ENCODE measurements at regions of chr1 and their contacts with region 1.

Region 1: GRCh38 chr1:156608036-156608674 is 6.9 kb upstream of the GPATCH4 start:
- DNase-seq: no peak
- H3K4me3 ChIP-seq: no peak overlapping the region
- CTCF ChIP-seq: peak; percentile 82

Region 2: DNA sequence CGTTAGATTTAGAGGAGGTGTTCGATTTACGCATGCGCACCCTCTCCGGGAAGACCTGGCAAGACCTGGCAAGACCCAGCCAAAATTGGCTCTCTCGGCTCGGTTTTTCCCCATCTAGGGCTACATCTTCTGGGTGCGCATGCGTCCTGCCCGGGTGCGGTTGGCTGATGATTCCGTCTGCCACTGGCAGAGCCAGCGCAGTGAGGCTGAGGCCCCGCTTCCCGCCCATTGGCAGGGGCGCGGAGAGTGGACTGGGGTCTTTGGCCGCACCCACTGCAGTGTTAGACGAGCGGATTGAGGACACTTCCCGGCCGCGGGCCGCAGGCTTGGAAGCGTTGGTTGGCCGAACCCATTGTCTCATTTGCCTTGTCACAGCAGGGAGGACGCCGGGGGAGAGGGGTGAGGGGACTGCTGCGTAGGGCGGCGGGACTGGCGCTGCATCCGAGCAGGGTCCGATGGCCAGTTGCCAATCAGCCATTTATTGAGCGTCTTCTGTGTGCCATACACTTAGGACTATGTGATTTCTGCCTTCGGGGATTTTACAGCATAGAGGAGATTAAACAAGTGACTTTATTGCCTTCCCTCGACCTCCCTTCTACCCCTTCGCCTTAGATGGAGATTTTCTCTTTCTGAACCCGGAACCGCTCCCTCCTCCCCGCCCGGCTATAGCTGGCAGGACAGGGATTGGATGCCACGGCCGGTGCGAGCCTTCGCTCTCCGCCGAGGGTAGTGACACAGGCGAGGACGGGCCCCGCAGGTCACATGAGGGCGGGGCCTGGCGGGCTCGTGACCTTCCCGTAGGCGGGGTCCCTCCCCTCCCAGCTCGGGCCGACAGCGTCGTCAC is 151.3 kb before region 1 on chr1:
- CTCF ChIA-PET with region 1: interaction called, 14 read pairs
- POLR2A ChIA-PET with region 1: no interaction called
- DNase-seq: peak; percentile 87
- H3K4me3 ChIP-seq: peak overlapping the region; percentile 64
- CTCF ChIP-seq: no peak

Region 3: GRCh38 chr1:156553860-156554480 is 54.2 kb before region 1 on chr1:
- CTCF ChIA-PET with region 1: no interaction called
- POLR2A ChIA-PET with region 1: no interaction called
- DNase-seq: no peak
- H3K4me3 ChIP-seq: no peak overlapping the region
- CTCF ChIP-seq: no peak

Region 4: GRCh38 chr1:156583821-156584622 is 24.1 kb before region 1 on chr1:
- CTCF ChIA-PET with region 1: interaction called, 31 read pairs
- POLR2A ChIA-PET with region 1: no interaction called
- DNase-seq: peak; percentile 40
- H3K4me3 ChIP-seq: no peak overlapping the region
- CTCF ChIP-seq: peak; percentile 81

Region 5: GRCh38 chr1:156591432-156592157 is 16.6 kb before region 1 on chr1 and contains the start of gene NAXE:
- CTCF ChIA-PET with region 1: interaction called, 51 read pairs
- POLR2A ChIA-PET with region 1: interaction called, 3 read pairs
- DNase-seq: no peak
- H3K4me3 ChIP-seq: peak within 1 kb of the TSS; percentile 83
- CTCF ChIP-seq: no peak

Region 6: GRCh38 chr1:156618853-156619581 is 10.9 kb after region 1 on chr1 and contains the start of gene HAPLN2:
- CTCF ChIA-PET with region 1: interaction called, 60 read pairs
- POLR2A ChIA-PET with region 1: no interaction called
- DNase-seq: no peak
- H3K4me3 ChIP-seq: no peak within 1 kb of the TSS
- CTCF ChIP-seq: peak; percentile 45